BJ (cell line): ENCODE measurements at regions of chr2 and their contacts with region 1.

Region 1: GRCh38 chr2:202881570-202881969 is 10.0 kb upstream of the ICA1L start:
- DNase-seq: no peak
- H3K4me3 ChIP-seq: no peak overlapping the region
- H3K27me3 ChIP-seq: no peaks in the 10 kb centered on the region
- CTCF ChIP-seq: no peak

Region 2: GRCh38 chr2:201696151-201696659 is 1185.4 kb before region 1 on chr2:
- CTCF ChIA-PET with region 1: no interaction called
- POLR2A ChIA-PET with region 1: no interaction called
- DNase-seq: peak; percentile 73
- H3K4me3 ChIP-seq: no peak overlapping the region
- H3K27me3 ChIP-seq: no peaks in the 10 kb centered on the region
- CTCF ChIP-seq: no peak

Region 3: DNA sequence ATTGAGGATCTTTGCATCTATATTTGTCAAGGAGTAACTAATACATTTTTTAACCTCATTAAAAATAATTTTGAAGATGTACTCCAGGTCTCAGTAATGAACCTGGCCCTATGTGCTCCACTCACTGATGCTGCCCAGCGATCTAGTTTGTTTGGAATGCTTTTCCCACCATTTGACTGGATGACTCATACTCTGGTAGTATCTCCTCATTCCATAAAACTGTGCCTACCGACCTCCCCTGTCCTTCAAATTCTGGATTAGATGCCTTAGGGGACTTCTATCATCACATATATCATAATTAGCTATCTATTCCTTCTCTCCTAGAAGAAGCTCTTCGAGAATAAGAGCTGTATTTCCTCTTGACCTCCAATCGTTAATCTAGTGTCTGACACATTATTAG is 163.0 kb before region 1 on chr2:
- CTCF ChIA-PET with region 1: no interaction called
- POLR2A ChIA-PET with region 1: no interaction called
- DNase-seq: no peak
- H3K4me3 ChIP-seq: no peak overlapping the region
- H3K27me3 ChIP-seq: no peaks in the 10 kb centered on the region
- CTCF ChIP-seq: no peak

Region 4: DNA sequence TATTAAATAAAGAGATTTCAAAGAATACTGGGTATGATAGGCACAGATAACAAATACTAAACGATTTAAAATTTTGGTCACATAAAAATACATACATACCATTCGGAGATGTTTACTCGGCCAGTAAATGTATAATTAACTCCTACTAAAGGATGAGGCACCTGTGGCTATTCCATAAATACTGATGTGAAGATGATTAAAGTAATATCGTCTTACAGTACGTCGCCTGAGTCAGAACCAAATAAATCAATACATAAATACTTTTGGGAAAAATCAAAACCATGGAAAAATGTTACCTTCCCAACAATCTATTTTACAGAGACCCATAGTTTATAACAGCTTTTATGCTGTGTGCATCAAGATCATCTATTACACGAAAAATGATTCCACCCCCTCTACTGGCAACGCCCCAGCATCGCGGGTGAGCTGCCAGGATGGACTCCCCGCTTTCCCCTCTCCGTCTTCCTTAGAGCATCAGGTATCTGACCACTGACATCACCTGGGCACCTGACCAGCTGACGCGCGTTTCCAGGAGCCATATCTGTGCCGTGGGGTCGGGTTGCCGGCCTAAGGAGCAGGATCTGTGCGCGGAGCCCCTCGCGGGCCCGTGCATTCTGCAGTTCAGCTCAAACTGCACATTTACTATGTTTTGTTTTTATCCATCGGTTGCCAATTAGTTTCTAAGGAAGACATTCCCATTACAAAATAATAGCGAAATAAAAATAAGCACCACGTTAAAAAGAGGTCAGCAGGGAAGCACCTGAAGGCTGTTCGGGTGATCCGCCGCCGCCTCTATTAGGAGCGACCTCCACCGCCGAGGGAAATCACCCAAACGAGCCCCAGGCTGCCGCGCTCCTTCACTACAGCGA is 10.9 kb before region 1 on chr2:
- CTCF ChIA-PET with region 1: interaction called, 10 read pairs
- POLR2A ChIA-PET with region 1: no interaction called
- DNase-seq: no peak
- H3K4me3 ChIP-seq: peak overlapping the region; percentile 83
- H3K27me3 ChIP-seq: no peaks in the 10 kb centered on the region
- CTCF ChIP-seq: peak; percentile 49